Endothelial cell of umbilical vein (primary cell): ENCODE measurements at regions of chr6 and their contacts with region 1.

Region 1: GRCh38 chr6:138856654-138857053 is 60.8 kb downstream of the ECT2L start:
- DNase-seq: no peak
- H3K4me3 ChIP-seq: no peak overlapping the region
- H3K27ac ChIP-seq: no peak overlapping the region
- H3K4me1 ChIP-seq: no peaks in the 10 kb centered on the region
- H3K27me3 ChIP-seq: peaks cover 0 to 6% of the 10 kb centered on the region in 2 experiments
- CTCF ChIP-seq: no peak
- POLR2A ChIP-seq: no peak

Region 2: GRCh38 chr6:138211027-138211581 is 645.5 kb before region 1 on chr6:
- CTCF ChIA-PET with region 1: no interaction called
- POLR2A ChIA-PET with region 1: no interaction called
- dilution Hi-C with region 1: no loop called
- intact Hi-C with region 1: loop called (anchors 10 kb)
- DNase-seq: no peak
- H3K4me3 ChIP-seq: no peak overlapping the region
- H3K27ac ChIP-seq: no peak overlapping the region
- H3K4me1 ChIP-seq: no peaks in the 10 kb centered on the region
- H3K27me3 ChIP-seq: no peaks in the 10 kb centered on the region
- CTCF ChIP-seq: no peak
- POLR2A ChIP-seq: no peak

Region 3: GRCh38 chr6:139099984-139100383 is 243.3 kb after region 1 on chr6:
- CTCF ChIA-PET with region 1: no interaction called
- POLR2A ChIA-PET with region 1: no interaction called
- dilution Hi-C with region 1: no loop called
- intact Hi-C with region 1: no loop called
- DNase-seq: no peak
- H3K4me3 ChIP-seq: no peak overlapping the region
- H3K27ac ChIP-seq: no peak overlapping the region
- H3K4me1 ChIP-seq: no peaks in the 10 kb centered on the region
- H3K27me3 ChIP-seq: peaks cover 0 to 2% of the 10 kb centered on the region in 2 experiments
- CTCF ChIP-seq: no peak
- POLR2A ChIP-seq: no peak